ENCODE measurements at regions of chr2 and their contacts with region 1.

Region 1: GRCh38 chr2:200713003-200713703 is 98.6 kb upstream of the BZW1 start:
- DNase-seq: peak; percentile 62 to 91 (median 72)
- ATAC-seq: peak; percentile 98
- H3K4me3 ChIP-seq: no peak overlapping the region
- H3K27ac ChIP-seq: peak overlapping the region; percentile 68
- H3K4me1 ChIP-seq: peaks cover 4 to 11% of the 10 kb centered on the region in 2 experiments; a peak in 2 of 5 replicates
- H3K27me3 ChIP-seq: no peaks in the 10 kb centered on the region
- CTCF ChIP-seq: peak; percentile 73 to 90 (median 76)
- EP300 ChIP-seq: no peak
- POLR2A ChIP-seq: peak; percentile 70
- RAD21 ChIP-seq: peak; percentile 90

Region 2: DNA sequence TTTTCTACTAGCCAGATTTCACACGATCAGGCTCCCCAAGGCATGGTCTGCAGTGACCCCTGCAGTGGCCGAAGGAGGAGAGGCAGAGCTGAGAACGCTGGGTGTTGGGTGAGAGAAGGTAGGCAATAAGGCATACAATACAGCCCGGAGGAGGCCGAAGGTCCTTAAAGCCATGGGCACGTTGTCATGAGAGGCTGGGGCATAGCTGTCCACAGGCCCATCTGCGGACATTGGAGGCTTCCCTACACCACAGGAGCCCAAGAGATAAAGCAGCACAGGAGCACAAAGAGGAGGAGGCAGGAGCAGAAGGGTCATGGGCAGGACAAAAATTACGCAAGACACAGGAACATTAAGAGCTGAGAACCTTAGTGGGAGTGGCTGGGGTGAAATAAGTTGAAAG is 81.9 kb after region 1 on chr2:
- CTCF ChIA-PET with region 1: interaction called, 3 read pairs
- POLR2A ChIA-PET with region 1: no interaction called
- in situ Hi-C with region 1: no loop called
- intact Hi-C with region 1: loop called (anchors 5 kb)
- DNase-seq: peak; percentile 48 to 82 (median 61)
- ATAC-seq: peak; percentile 94
- H3K4me3 ChIP-seq: no peak overlapping the region
- H3K27ac ChIP-seq: peak overlapping the region; percentile 45
- H3K4me1 ChIP-seq: peaks cover 8 to 23% of the 10 kb centered on the region in 2 experiments; a peak in 4 of 5 replicates
- H3K27me3 ChIP-seq: no peaks in the 10 kb centered on the region
- CTCF ChIP-seq: peak; percentile 31 to 46 (median 37); a peak in 5 of 6 replicates
- EP300 ChIP-seq: no peak; the same call in 1 of the 2 replicates
- POLR2A ChIP-seq: no peak; the same call in 1 of the 2 replicates
- RAD21 ChIP-seq: peak; percentile 27 to 40; a peak in 3 of 4 replicates

Region 3: DNA sequence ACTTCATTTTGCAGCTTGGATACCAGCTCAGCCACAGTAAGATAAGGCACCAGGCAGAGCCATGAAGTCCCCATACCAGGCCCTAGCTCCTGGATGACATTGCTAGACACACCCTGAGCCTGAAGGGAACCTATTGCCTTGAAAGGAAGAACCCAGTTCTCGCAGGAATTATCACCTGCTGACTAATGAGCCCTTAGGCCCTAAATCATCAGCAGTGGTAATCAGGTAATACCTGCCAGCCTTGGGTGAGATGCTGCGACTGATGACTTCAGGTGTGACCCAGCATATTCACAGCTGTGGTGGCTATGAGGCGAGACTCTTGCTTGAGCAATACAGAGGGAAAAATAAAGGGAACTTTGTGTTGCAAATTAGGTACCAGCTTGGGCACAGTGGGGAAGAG is 126.4 kb after region 1 on chr2:
- CTCF ChIA-PET with region 1: no interaction called
- POLR2A ChIA-PET with region 1: no interaction called
- in situ Hi-C with region 1: no loop called
- intact Hi-C with region 1: no loop called
- DNase-seq: no peak
- ATAC-seq: no peak
- H3K4me3 ChIP-seq: no peak overlapping the region
- H3K27ac ChIP-seq: no peak overlapping the region
- H3K4me1 ChIP-seq: peaks cover 0 to 5% of the 10 kb centered on the region in 2 experiments; a peak in 1 of 5 replicates
- H3K27me3 ChIP-seq: no peaks in the 10 kb centered on the region
- CTCF ChIP-seq: no peak
- EP300 ChIP-seq: no peak
- POLR2A ChIP-seq: no peak
- RAD21 ChIP-seq: no peak

Region 4: DNA sequence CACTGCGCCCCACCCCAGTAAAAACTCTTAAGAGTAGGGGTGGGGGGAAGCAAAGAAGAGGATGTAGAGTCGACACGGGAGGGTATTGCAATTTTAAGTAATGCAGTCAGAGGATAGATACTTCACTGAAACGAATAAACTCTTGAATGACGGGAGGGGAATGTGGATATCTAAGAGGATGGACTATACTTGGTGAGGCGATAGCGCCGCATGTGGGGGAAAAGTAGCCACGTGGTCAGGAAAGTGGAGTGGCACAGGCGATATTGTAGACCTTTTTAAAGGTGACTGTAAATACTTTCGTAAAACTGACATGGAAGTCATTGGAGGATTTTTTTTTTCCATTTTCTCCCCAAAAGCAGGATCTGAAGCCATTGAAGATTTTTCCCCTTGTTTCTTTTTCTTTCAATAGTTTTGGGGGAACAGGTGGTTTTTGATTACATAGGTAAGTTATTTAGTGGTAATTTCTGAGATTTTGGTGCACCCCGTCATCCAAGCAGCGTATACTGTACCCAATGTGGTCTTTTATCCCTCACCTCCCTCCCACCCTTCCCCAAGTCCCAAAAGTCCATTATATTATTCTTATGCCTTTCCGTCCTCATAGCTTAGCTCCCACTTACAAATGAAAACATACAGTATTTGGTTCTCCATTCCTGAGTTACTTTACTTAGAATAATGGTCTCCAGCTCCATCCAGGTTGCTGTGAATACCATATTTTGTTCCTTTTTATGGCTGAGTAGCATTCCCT is 137.5 kb after region 1 on chr2:
- CTCF ChIA-PET with region 1: no interaction called
- POLR2A ChIA-PET with region 1: no interaction called
- in situ Hi-C with region 1: no loop called
- intact Hi-C with region 1: loop called (anchors 2 kb)
- DNase-seq: peak in 3 of 4 experiments; percentile 12 to 61 (median 36)
- ATAC-seq: peak; percentile 82
- H3K4me3 ChIP-seq: no peak overlapping the region
- H3K27ac ChIP-seq: no peak overlapping the region
- H3K4me1 ChIP-seq: no peaks in the 10 kb centered on the region; a peak in 1 of 5 replicates
- H3K27me3 ChIP-seq: no peaks in the 10 kb centered on the region
- CTCF ChIP-seq: peak; percentile 36 to 46 (median 43); a peak in 2 of 6 replicates
- EP300 ChIP-seq: no peak
- POLR2A ChIP-seq: no peak
- RAD21 ChIP-seq: peak in 1 of 2 experiments; percentile 35; a peak in 1 of 4 replicates

Region 5: DNA sequence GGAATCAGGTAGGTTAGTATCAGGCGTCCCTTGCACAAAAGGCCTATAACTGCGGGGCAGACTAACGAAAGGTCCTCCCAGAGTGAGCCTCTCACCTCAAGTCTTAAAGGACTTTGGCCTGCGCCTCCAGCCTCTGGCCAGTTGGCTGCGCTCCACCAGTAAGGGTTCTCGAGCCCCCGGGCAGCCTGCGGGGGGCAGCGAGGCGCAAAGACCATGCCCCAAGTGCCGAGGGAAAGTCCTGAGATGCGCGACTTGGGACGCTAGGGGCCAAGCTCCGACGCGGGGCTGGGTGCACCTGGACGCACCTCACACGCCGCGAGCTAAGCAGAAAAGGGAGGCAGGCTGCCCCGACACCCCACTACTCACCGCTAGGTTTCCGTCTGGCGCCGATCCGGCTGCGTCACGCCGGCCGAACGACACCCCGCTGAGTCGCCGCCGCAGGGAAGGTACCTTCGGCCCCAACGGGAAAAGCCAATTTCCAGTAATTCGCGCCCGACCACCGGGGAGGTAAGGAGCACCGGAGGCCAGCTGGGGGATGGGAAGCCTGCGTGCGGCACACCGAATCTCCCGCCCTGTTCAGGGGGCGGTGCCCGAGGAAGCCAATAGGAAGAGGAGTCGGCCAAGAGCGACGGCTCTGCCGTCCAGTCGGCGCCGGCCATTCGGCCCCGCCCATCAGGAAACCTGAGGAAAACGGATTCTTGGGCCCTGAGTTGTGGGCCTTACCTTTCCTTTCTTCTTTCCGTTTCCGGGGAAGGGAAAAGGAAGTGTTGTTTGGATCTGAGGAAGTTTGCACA is 250.2 kb after region 1 on chr2 and contains the start of gene ORC2:
- CTCF ChIA-PET with region 1: no interaction called
- POLR2A ChIA-PET with region 1: no interaction called
- in situ Hi-C with region 1: no loop called
- intact Hi-C with region 1: loop called (anchors 2 kb)
- DNase-seq: peak; percentile 94 to 96 (median 94)
- ATAC-seq: peak; percentile 93
- H3K4me3 ChIP-seq: peak within 1 kb of the TSS; percentile 63
- H3K27ac ChIP-seq: peak within 1 kb of the TSS; percentile 94
- H3K4me1 ChIP-seq: peaks cover 8 to 10% of the 10 kb centered on the region in 2 experiments; a peak in 4 of 5 replicates
- H3K27me3 ChIP-seq: no peaks in the 10 kb centered on the region
- CTCF ChIP-seq: peak; percentile 73 to 97 (median 77)
- EP300 ChIP-seq: no peak
- POLR2A ChIP-seq: peak; percentile 81
- RAD21 ChIP-seq: peak; percentile 46 to 59
- polyA plus RNA-seq, gene ORC2: 5.6 to 9.7 TPM

Region 6: GRCh38 chr2:201182650-201183364 is 469.7 kb after region 1 on chr2 and contains the start of gene CASP10:
- CTCF ChIA-PET with region 1: no interaction called
- POLR2A ChIA-PET with region 1: no interaction called
- in situ Hi-C with region 1: loop called (anchors 25 kb)
- intact Hi-C with region 1: no loop called
- DNase-seq: peak; percentile 70 to 88 (median 78)
- ATAC-seq: peak; percentile 90
- H3K4me3 ChIP-seq: peak within 1 kb of the TSS; percentile 58
- H3K27ac ChIP-seq: peak within 1 kb of the TSS; percentile 84
- H3K4me1 ChIP-seq: peaks cover 5 to 14% of the 10 kb centered on the region in 2 experiments; a peak in 3 of 5 replicates
- H3K27me3 ChIP-seq: no peaks in the 10 kb centered on the region
- CTCF ChIP-seq: peak; percentile 48 to 81 (median 65)
- EP300 ChIP-seq: peak; percentile 58; the same call in 1 of the 2 replicates
- POLR2A ChIP-seq: peak; percentile 82
- RAD21 ChIP-seq: peak; percentile 59 to 84
- polyA plus RNA-seq, gene CASP10: 7.1 to 7.2 TPM